Naive thymus-derived CD4-positive, alpha-beta T cell (primary cell): ENCODE measurements at regions of chr5 and their contacts with region 1.

Region 1: GRCh38 chr5:154072414-154073171 is 33.8 kb downstream of the MFAP3 start:
- DNase-seq: peak; percentile 46 to 83 (median 73)
- ATAC-seq: peak; percentile 92
- H3K4me3 ChIP-seq: no peak overlapping the region
- H3K4me3 Mint-ChIP-seq: peak overlapping the region in 2 of 10 donors; percentile 55 to 61
- H3K27ac ChIP-seq: no peak overlapping the region
- H3K27ac Mint-ChIP-seq: peak overlapping the region in 5 of 9 donors; percentile 19 to 63 (median 48)
- H3K4me1 ChIP-seq: peaks cover 0 to 13% of the 10 kb centered on the region in 2 donors
- H3K4me1 Mint-ChIP-seq: peaks cover 7 to 61% (median 34%) of the 10 kb centered on the region in 7 donors
- H3K27me3 ChIP-seq: no peaks in the 10 kb centered on the region
- H3K27me3 Mint-ChIP-seq: peaks cover 0 to 9% (median 6%) of the 10 kb centered on the region in 5 donors

Region 2: GRCh38 chr5:154038707-154039457 is 33.7 kb before region 1 on chr5 and contains the starts of genes FAM114A2 and MFAP3:
- CTCF ChIA-PET with region 1: interaction called, 3 read pairs
- POLR2A ChIA-PET with region 1: no interaction called
- intact Hi-C with region 1: loop called in 1 of 2 experiments (anchors 1 kb)
- DNase-seq: peak; percentile 74 to 87 (median 84)
- ATAC-seq: peak; percentile 98
- H3K4me3 ChIP-seq: peak within 1 kb of the TSS; percentile 93
- H3K4me3 Mint-ChIP-seq: peak within 1 kb of the TSS; percentile 91 to 99 (median 98)
- H3K27ac ChIP-seq: peak within 1 kb of the TSS; percentile 80
- H3K27ac Mint-ChIP-seq: peak within 1 kb of the TSS; percentile 96 to 99 (median 97)
- H3K4me1 ChIP-seq: peaks cover 11 to 21% of the 10 kb centered on the region in 2 donors
- H3K4me1 Mint-ChIP-seq: peaks cover 37 to 78% (median 76%) of the 10 kb centered on the region in 7 donors
- H3K27me3 ChIP-seq: no peaks in the 10 kb centered on the region
- H3K27me3 Mint-ChIP-seq: no peaks in the 10 kb centered on the region
- total RNA-seq, gene FAM114A2: 26.2 to 53.1 (median 37.1) TPM
- total RNA-seq, gene MFAP3: 11.1 to 30.6 (median 28.1) TPM

Region 3: DNA sequence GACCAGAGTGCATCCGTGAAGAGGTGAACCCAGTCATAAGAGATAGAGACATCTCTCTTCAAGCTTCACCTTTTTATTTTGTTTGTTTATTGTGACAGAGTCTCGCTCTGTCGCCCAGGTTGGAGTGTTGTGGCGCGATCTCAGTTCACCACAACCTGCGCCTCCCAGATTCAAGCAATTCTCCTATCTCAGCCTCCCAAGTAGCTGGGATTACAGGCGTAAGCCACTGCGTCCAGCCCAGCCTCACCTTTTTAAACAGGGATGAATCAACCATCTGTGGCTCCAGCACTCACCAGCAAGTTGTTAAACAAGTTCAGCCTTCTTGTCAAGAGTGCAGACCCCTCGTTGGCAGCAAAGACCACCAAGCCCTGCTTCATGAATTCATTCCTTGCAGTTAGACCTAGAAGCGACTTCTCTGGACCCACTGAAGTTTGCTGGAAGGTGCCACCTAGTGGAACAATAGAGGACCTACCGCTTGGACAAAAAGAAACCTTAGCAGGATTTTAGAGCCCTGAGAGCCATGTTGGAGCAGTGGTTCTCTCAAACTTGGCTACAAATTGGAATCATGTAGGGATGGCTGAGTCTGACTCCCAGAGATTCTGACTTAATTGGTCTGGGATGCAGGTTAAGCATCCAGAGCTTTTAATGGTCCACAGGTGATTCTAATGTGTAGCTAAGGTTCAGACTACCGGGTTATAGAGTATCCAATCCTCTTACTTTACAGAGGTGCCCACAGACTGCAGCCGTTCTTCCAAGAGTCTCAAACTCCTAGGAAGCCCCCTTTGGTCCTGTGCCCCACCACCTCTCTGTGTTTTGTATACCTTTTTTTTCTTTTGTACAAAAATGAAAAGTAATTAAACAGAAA is 107.5 kb after region 1 on chr5:
- CTCF ChIA-PET with region 1: interaction called, 19 read pairs
- POLR2A ChIA-PET with region 1: no interaction called
- intact Hi-C with region 1: loop called (anchors 1 kb)
- DNase-seq: peak in 6 of 9 donors; percentile 28 to 61 (median 43)
- ATAC-seq: peak; percentile 92
- H3K4me3 ChIP-seq: no peak overlapping the region
- H3K4me3 Mint-ChIP-seq: no peak overlapping the region
- H3K27ac ChIP-seq: no peak overlapping the region
- H3K27ac Mint-ChIP-seq: no peak overlapping the region
- H3K4me1 ChIP-seq: peaks cover 0 to 5% of the 10 kb centered on the region in 2 donors
- H3K4me1 Mint-ChIP-seq: peaks cover 0 to 31% (median 0%) of the 10 kb centered on the region in 7 donors
- H3K27me3 ChIP-seq: no peaks in the 10 kb centered on the region
- H3K27me3 Mint-ChIP-seq: peaks cover 0 to 22% (median 11%) of the 10 kb centered on the region in 5 donors

Region 4: DNA sequence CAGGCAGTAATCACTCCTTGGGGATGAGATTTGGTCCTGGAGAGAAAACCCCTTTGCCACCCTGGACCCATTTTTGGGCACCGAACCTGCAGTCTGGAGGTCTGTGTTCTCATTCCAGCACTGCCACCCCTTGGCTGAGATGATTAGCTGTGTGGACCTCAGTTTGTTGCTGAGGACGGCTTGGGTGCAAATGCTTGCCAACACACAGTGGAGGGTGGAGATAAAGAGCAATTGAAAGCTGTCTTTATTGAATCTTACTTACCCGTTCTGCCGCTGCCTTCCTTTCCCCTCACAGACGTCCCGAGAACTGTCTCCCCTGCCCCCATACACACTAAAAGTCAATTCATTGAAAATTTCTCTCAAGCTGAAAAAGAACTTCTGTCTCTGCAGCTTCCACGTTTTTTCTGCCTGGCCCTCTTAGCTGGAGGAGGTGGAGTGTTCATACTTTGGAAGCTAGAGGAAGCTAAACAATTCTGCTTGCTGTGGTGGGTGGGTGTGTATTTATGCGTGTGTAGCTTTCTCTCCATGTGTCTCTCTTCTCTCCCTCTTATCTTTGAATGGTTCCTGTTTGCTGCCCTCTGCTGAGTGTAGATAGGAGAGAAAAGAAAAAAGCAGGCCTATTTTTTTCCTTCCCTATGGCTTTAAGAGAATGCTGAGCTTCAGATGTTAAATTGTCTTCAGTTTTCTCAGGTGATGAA is 124.5 kb after region 1 on chr5:
- CTCF ChIA-PET with region 1: interaction called, 20 read pairs
- POLR2A ChIA-PET with region 1: no interaction called
- intact Hi-C with region 1: loop called (anchors 1 kb)
- DNase-seq: peak in 2 of 9 donors; percentile 19 to 27
- ATAC-seq: peak; percentile 65
- H3K4me3 ChIP-seq: no peak overlapping the region
- H3K4me3 Mint-ChIP-seq: peak overlapping the region; percentile 1 to 84 (median 58)
- H3K27ac ChIP-seq: peak overlapping the region; percentile 0
- H3K27ac Mint-ChIP-seq: peak overlapping the region; percentile 27 to 97 (median 76)
- H3K4me1 ChIP-seq: peaks cover 28 to 29% of the 10 kb centered on the region in 2 donors
- H3K4me1 Mint-ChIP-seq: peaks cover 43 to 78% (median 49%) of the 10 kb centered on the region in 7 donors
- H3K27me3 ChIP-seq: no peaks in the 10 kb centered on the region
- H3K27me3 Mint-ChIP-seq: no peaks in the 10 kb centered on the region

Region 5: DNA sequence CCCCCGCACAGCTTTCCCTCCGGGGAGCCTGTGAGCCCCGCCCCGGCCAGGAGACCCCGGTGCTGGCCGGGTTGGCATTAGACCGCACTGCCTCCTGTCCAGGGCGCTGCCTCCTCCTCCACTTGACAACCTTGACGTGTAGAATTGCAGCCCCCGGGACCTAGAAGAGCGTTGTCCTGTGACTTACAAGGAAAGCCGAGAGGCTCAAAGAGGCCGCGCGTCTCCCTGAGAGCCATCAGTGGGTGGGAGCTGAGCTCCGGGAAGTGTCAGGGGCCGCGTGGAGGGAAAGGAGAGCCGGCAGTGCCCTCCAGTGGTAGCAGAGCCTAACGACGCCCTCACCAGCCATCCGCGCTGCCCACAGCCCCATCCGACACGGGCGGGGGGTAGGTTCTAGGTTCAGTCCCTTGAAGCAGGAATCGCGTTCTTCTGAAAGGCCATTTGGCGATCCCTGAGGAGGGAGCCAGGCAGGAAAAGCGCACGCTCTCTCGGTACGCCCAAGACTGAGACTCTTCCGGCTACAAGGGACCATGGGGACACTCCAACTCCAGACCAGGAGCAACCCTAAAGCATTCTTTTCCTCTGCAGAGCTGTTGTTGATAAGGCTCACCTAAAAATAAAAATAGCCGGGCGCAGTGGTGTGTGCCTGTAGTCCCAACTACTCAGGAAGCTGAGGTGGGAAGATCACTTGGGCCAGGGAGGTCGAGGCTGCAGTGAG is 332.6 kb after region 1 on chr5:
- CTCF ChIA-PET with region 1: interaction called, 45 read pairs
- POLR2A ChIA-PET with region 1: no interaction called
- intact Hi-C with region 1: loop called (anchors 1 kb)
- DNase-seq: peak; percentile 31 to 75 (median 61)
- ATAC-seq: peak; percentile 96
- H3K4me3 ChIP-seq: peak overlapping the region; percentile 33
- H3K4me3 Mint-ChIP-seq: peak overlapping the region; percentile 35 to 80 (median 65)
- H3K27ac ChIP-seq: no peak overlapping the region
- H3K27ac Mint-ChIP-seq: peak overlapping the region in 3 of 9 donors; percentile 18 to 73 (median 32)
- H3K4me1 ChIP-seq: peaks cover 4 to 8% of the 10 kb centered on the region in 2 donors
- H3K4me1 Mint-ChIP-seq: peaks cover 0 to 15% (median 10%) of the 10 kb centered on the region in 7 donors
- H3K27me3 ChIP-seq: no peaks in the 10 kb centered on the region
- H3K27me3 Mint-ChIP-seq: no peaks in the 10 kb centered on the region

Region 6: GRCh38 chr5:154467655-154468354 is 395.2 kb after region 1 on chr5:
- CTCF ChIA-PET with region 1: interaction called, 3 read pairs
- POLR2A ChIA-PET with region 1: no interaction called
- intact Hi-C with region 1: loop called (anchors 2 to 5 kb)
- DNase-seq: peak; percentile 20 to 81 (median 57)
- ATAC-seq: peak; percentile 88
- H3K4me3 ChIP-seq: no peak overlapping the region
- H3K4me3 Mint-ChIP-seq: no peak overlapping the region
- H3K27ac ChIP-seq: no peak overlapping the region
- H3K27ac Mint-ChIP-seq: peak overlapping the region in 1 of 9 donors; percentile 12
- H3K4me1 ChIP-seq: peaks cover 0 to 5% of the 10 kb centered on the region in 2 donors
- H3K4me1 Mint-ChIP-seq: peaks cover 0 to 14% (median 3%) of the 10 kb centered on the region in 7 donors
- H3K27me3 ChIP-seq: peaks cover under 1 to 13% of the 10 kb centered on the region in 2 donors
- H3K27me3 Mint-ChIP-seq: peaks cover 30 to 60% (median 40%) of the 10 kb centered on the region in 5 donors